Mammary epithelial cell (primary cell): ENCODE measurements at regions of chr16 and their contacts with region 1.

Region 1: DNA sequence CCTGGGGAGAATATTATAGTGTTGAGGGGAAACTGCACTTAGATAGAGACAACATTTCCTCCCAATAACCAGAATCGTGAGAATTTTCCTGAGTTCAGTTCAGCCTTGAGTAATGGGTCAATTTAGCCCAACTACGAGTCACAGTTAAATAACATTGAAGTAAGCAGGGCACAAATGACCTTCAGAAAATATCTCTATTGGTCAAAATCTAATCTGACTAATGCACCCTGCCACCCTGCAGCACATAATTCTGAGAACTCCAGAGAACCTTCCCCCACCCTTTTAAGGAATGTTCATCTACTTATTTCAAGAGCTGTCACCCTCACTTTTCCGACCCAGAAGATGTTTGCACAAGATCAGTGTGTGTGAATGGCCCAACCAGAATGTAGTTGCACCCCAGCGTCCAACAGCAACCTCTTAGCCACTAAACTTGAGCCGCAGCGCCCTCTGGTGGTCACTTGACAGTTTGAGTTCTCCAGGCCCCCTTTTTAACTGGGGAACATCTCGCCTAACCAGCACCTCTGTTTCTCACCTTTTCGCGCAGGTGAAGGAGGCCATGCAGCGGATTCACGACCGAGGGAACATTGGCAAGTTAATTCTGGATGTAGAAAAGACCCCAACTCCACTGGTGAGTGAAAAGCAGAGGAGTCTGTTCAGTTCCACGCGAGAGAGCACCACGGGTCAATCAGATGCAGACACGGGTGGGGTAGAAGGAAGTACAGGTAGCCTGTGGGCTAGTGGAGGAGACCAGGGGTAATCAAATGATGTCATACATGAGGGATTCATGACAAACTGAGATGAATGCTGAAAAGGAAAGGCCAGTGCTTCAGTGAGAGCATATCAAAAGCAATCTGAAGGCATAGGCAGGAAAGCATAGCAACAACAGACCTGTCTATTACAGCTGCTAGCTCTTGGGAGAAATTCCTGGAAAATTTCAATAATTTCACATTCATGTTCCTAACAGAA is 50.8 kb upstream of the CLEC3A start:
- DNase-seq: peak; percentile 42
- H3K4me3 ChIP-seq: no peak overlapping the region
- H3K27ac ChIP-seq: no peak overlapping the region
- H3K4me1 ChIP-seq: no peaks in the 10 kb centered on the region
- H3K27me3 ChIP-seq: no peaks in the 10 kb centered on the region
- CTCF ChIP-seq: peak; percentile 70 to 77

Region 2: GRCh38 chr16:77599793-77600415 is 371.7 kb before region 1 on chr16:
- CTCF ChIA-PET with region 1: no interaction called
- dilution Hi-C with region 1: no loop called
- in situ Hi-C with region 1: no loop called
- intact Hi-C with region 1: loop called (anchors 1 kb)
- DNase-seq: peak; percentile 26
- H3K4me3 ChIP-seq: no peak overlapping the region
- H3K27ac ChIP-seq: no peak overlapping the region
- H3K4me1 ChIP-seq: peaks cover 4% of the 10 kb centered on the region
- H3K27me3 ChIP-seq: no peaks in the 10 kb centered on the region
- CTCF ChIP-seq: peak; percentile 91 to 92

Region 3: GRCh38 chr16:77782694-77783093 is 188.9 kb before region 1 on chr16:
- CTCF ChIA-PET with region 1: no interaction called
- dilution Hi-C with region 1: no loop called
- in situ Hi-C with region 1: no loop called
- intact Hi-C with region 1: loop called (anchors 2 kb)
- DNase-seq: peak; percentile 11
- H3K4me3 ChIP-seq: no peak overlapping the region
- H3K27ac ChIP-seq: no peak overlapping the region
- H3K4me1 ChIP-seq: no peaks in the 10 kb centered on the region
- H3K27me3 ChIP-seq: no peaks in the 10 kb centered on the region
- CTCF ChIP-seq: peak; percentile 4 to 36

Region 4: DNA sequence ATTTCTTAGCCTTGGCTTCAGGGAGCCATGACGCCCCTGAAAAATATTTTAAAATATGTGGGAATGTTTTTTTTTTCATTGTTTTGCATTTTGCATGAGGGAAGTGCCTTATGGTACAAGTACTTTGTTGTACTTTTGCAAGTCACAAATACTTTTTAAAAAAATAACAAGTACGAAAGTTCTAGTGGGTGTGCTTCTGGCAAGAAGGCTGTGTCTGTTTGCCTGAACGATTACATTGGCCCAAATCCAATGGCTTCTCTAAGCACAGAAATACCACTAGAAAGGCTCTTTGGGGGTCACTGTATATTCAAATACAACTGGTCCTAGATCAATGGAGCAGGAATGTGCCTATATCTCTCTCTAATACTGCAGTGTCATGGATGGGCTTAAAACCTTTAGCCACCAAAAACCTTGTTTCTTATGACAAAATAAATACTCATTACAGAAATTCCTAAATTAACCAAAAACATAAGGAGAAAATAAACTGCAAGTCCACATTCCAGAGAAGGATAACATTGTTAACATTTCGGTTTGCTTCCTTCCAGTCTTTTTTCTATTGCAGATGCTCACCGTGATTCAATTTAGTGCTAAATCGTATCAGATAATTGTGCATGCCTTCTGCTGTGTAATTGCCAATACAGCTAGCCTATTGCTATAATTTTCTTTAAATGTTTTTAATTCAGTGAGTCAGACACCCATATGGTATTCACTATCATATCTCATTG is 85.9 kb before region 1 on chr16:
- CTCF ChIA-PET with region 1: no interaction called
- dilution Hi-C with region 1: loop called (anchors 5 kb)
- in situ Hi-C with region 1: no loop called
- intact Hi-C with region 1: no loop called
- DNase-seq: no peak
- H3K4me3 ChIP-seq: no peak overlapping the region
- H3K27ac ChIP-seq: no peak overlapping the region
- H3K4me1 ChIP-seq: no peaks in the 10 kb centered on the region
- H3K27me3 ChIP-seq: no peaks in the 10 kb centered on the region
- CTCF ChIP-seq: no peak

Region 5: DNA sequence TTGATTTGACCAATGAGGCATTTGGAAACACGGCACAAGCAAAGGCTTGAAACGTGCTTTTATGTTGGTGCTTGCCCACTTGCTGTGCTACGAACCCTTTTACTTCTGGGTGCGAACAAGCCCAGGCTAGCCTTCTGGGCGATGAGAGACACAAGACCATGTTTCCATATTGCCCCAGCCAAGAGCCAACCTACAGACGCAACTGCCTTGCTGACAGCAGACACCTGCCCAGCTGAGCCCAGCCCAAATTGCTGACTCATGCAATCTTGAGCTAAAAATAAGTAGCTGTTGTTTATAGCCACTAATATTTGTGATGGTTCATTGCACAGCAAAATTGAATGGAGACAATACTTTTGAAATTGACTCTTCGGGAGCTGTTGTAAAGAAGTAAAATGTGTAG is 592.3 kb after region 1 on chr16:
- CTCF ChIA-PET with region 1: no interaction called
- dilution Hi-C with region 1: no loop called
- in situ Hi-C with region 1: no loop called
- intact Hi-C with region 1: no loop called
- DNase-seq: peak; percentile 20
- H3K4me3 ChIP-seq: no peak overlapping the region
- H3K27ac ChIP-seq: no peak overlapping the region
- H3K4me1 ChIP-seq: peaks cover 13% of the 10 kb centered on the region
- H3K27me3 ChIP-seq: no peaks in the 10 kb centered on the region
- CTCF ChIP-seq: no peak